ENCODE measurements at regions of chrX and their contacts with region 1.

Region 1: GRCh38 chrX:104098151-104098808 is 14.0 kb upstream of the ZCCHC18 start:
- DNase-seq: peak; percentile 77
- ATAC-seq: peak; percentile 73; the same call in 1 of the 2 replicates
- H3K4me3 ChIP-seq: no peak overlapping the region
- H3K27ac ChIP-seq: no peak overlapping the region
- H3K4me1 ChIP-seq: no peaks in the 10 kb centered on the region
- H3K27me3 ChIP-seq: peaks cover 8% of the 10 kb centered on the region
- CTCF ChIP-seq: peak; percentile 57
- POLR2A ChIP-seq: no peak
- RAD21 ChIP-seq: peak; percentile 49

Region 2: GRCh38 chrX:104113222-104113965 is 15.1 kb after region 1 on chrX:
- CTCF ChIA-PET with region 1: interaction called, 4 read pairs
- POLR2A ChIA-PET with region 1: no interaction called
- dilution Hi-C with region 1: no loop called
- in situ Hi-C with region 1: no loop called
- intact Hi-C with region 1: loop called (anchors 2 kb)
- DNase-seq: peak; percentile 53
- ATAC-seq: peak; percentile 56
- H3K4me3 ChIP-seq: peak overlapping the region; percentile 96
- H3K27ac ChIP-seq: no peak overlapping the region
- H3K4me1 ChIP-seq: no peaks in the 10 kb centered on the region
- H3K27me3 ChIP-seq: peaks cover 2% of the 10 kb centered on the region; the same call in 1 of the 2 replicates
- CTCF ChIP-seq: peak; percentile 47
- POLR2A ChIP-seq: no peak
- RAD21 ChIP-seq: peak; percentile 33; the same call in 1 of the 2 replicates

Region 3: GRCh38 chrX:104136241-104137019 is 38.1 kb after region 1 on chrX:
- CTCF ChIA-PET with region 1: no interaction called
- POLR2A ChIA-PET with region 1: no interaction called
- dilution Hi-C with region 1: no loop called
- in situ Hi-C with region 1: no loop called
- intact Hi-C with region 1: loop called (anchors 1 kb)
- DNase-seq: peak; percentile 91
- ATAC-seq: peak; percentile 96
- H3K4me3 ChIP-seq: peak overlapping the region; percentile 73
- H3K27ac ChIP-seq: peak overlapping the region; percentile 90
- H3K4me1 ChIP-seq: peaks cover 2% of the 10 kb centered on the region; the same call in 1 of the 2 replicates
- H3K27me3 ChIP-seq: peaks cover 2% of the 10 kb centered on the region; the same call in 1 of the 2 replicates
- CTCF ChIP-seq: peak; percentile 77
- POLR2A ChIP-seq: no peak
- RAD21 ChIP-seq: peak; percentile 78

Region 4: GRCh38 chrX:104270920-104271512 is 172.7 kb after region 1 on chrX:
- CTCF ChIA-PET with region 1: no interaction called
- POLR2A ChIA-PET with region 1: no interaction called
- dilution Hi-C with region 1: no loop called
- in situ Hi-C with region 1: no loop called
- intact Hi-C with region 1: loop called (anchors 1 kb)
- DNase-seq: peak; percentile 22
- ATAC-seq: peak; percentile 42; the same call in 1 of the 2 replicates
- H3K4me3 ChIP-seq: peak overlapping the region; percentile 29; the same call in 1 of the 2 replicates
- H3K27ac ChIP-seq: no peak overlapping the region
- H3K4me1 ChIP-seq: no peaks in the 10 kb centered on the region
- H3K27me3 ChIP-seq: peaks cover 21% of the 10 kb centered on the region
- CTCF ChIP-seq: peak; percentile 62
- POLR2A ChIP-seq: no peak
- RAD21 ChIP-seq: peak; percentile 45

Measured in IMR-90 (cell line).